ENCODE measurements at regions of chr4 and their contacts with region 1.

Region 1: DNA sequence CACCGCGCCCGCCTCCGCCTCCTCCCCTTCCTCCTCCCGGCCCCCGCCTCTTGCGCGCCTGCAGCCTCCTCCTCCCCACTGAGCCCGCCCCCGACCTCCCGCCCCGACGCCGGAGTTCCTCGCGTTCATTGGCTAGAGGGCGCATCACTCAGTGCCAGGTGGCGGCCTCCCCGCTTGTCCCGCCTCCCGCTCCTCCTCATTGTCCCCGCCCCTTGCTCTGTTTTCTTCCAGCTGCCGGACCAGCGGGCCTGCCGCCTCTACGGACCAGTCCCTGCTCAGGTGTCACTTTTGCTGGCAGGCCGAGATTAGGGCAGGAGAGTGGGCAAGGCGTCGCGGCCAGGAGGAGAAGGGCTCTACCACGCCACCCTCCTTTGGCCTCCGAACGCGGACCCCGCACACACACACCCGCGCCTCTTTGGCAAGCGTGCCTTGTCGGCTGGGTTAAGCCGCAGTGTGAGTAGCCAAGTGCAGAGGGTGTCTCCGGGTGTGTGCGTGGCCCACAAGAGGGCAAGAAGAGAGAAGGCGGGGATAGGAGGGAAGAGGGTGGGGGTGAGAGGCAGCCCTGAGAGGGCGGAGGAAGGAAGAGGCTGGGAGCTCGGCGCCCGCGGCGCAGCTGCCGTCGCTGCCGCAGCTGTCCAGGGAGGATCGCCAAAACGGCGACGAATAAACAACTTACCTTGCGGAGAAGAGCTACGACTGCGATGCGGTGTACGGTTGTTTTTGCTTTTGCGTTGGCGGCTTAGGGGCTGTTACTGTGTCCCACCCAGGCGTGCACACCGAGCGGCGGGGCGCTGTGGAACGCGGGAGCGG is 436 bp upstream of the PPP3CA start:
- DNase-seq: peak; percentile 100

Region 2: GRCh38 chr4:101169044-101170014 is 178.4 kb before region 1 on chr4:
- intact Hi-C with region 1: loop called (anchors 5 kb)
- DNase-seq: no peak

Region 3: GRCh38 chr4:101191302-101192098 is 156.3 kb before region 1 on chr4:
- intact Hi-C with region 1: loop called (anchors 2 kb)
- DNase-seq: peak; percentile 84

Region 4: GRCh38 chr4:101292901-101293300 is 54.9 kb before region 1 on chr4:
- intact Hi-C with region 1: loop called (anchors 5 kb)
- DNase-seq: no peak

Region 5: DNA sequence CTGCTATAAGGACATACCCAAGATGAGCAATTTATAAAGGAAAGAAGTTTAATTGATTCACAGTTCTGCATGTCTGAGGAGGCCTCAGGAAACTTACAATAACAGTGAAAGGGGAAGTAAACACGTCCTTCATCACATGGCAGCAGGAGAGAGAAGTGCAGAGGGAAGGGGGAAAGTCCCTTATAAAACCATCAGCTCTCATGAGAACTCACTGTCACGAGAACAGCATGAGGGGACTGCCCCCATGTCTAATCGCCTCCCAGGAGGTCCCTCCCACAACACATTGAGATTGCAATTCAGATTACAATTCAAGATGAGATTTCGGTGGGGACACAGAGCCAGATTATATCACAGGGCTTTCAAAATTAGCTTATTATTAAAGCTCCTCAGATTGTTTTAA is 209.1 kb after region 1 on chr4:
- intact Hi-C with region 1: no loop called
- DNase-seq: no peak